ENCODE measurements at regions of chr2 and their contacts with region 1.

Region 1: DNA sequence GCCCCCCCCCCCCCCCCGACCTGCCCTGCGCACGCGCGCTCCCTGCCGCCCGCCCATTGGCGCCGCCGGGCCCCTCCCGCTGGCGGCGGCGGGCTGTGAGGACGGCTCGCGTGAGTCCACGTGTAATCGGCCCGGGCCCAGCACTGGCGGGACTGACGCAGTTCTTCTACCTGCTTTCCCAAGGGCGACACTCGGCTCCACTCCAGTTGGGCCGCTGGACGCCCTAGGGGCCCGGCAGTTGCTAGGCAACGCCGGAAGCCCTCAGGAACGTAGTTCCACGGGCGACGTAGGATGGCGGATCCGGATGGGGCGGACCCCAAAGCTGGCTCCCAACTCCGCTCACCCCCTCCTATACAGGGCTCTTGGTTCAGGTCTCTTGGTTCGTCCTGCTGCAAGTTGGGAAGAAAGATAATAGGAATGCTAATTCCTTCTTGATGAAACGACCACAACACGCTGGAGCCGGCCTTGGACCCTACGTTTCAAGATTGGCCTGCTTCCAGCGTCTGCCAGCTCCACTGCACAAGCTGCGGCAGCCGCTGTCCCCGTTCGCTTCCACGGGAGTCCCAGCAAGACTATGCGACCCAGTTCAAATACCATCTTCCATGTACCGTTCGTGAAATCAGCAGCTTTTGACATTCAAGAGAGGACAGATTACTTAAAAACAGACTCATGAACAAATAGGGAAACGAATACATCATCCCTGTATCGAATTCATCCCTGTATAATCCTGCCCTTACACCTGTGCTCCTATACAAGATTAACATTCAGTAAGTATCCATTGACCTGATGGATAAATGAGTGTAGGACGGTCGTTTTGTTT is 415 bp upstream of the MCFD2 start:
- DNase-seq: peak; percentile 96
- ATAC-seq: peak; percentile 88
- H3K4me3 ChIP-seq: peak overlapping the region; percentile 74 to 100 (median 75)
- H3K27ac ChIP-seq: peak overlapping the region; percentile 89
- H3K4me1 ChIP-seq: peaks cover 58% of the 10 kb centered on the region
- H3K27me3 ChIP-seq: no peaks in the 10 kb centered on the region; a peak in 1 of 5 replicates
- CTCF ChIP-seq: no peak
- EP300 ChIP-seq: peak in 1 of 2 experiments; percentile 26; a peak in 1 of 4 replicates
- POLR2A ChIP-seq: peak; percentile 79 to 88
- RAD21 ChIP-seq: no peak

Region 2: GRCh38 chr2:46679761-46680160 is 236.3 kb before region 1 on chr2:
- CTCF ChIA-PET with region 1: no interaction called
- POLR2A ChIA-PET with region 1: no interaction called
- in situ Hi-C with region 1: no loop called
- intact Hi-C with region 1: no loop called
- DNase-seq: no peak
- ATAC-seq: no peak
- H3K4me3 ChIP-seq: no peak overlapping the region
- H3K27ac ChIP-seq: no peak overlapping the region
- H3K4me1 ChIP-seq: no peaks in the 10 kb centered on the region
- H3K27me3 ChIP-seq: peaks cover 0 to 13% of the 10 kb centered on the region in 2 experiments; a peak in 2 of 5 replicates
- CTCF ChIP-seq: no peak
- EP300 ChIP-seq: no peak
- POLR2A ChIP-seq: no peak
- RAD21 ChIP-seq: no peak

Region 3: DNA sequence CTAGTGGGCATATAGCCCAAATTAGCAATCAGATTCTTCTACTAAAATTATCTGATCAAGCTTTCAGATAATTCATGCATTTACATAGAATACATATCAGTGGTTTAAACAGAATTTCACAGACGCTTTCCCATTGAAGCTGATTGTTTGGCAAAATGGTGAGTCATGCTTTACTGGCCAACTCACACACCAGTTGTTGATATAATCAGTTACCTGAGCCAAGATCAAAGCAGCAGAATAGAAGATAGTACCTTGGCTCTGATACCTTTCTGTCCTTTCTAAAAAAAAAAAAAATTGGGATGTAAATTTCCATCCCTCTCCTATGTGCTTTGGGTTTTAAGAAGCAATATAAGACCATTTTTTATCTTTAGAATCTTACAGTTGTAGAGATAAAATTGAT is 178.4 kb before region 1 on chr2:
- CTCF ChIA-PET with region 1: no interaction called
- POLR2A ChIA-PET with region 1: no interaction called
- in situ Hi-C with region 1: no loop called
- intact Hi-C with region 1: no loop called
- DNase-seq: peak; percentile 90
- ATAC-seq: peak; percentile 86
- H3K4me3 ChIP-seq: no peak overlapping the region
- H3K27ac ChIP-seq: peak overlapping the region; percentile 31
- H3K4me1 ChIP-seq: peaks cover 57% of the 10 kb centered on the region
- H3K27me3 ChIP-seq: no peaks in the 10 kb centered on the region
- CTCF ChIP-seq: no peak
- EP300 ChIP-seq: peak in 1 of 2 experiments; percentile 84; a peak in 2 of 4 replicates
- POLR2A ChIP-seq: no peak
- RAD21 ChIP-seq: no peak

Region 4: GRCh38 chr2:46954948-46955571 is 39.0 kb after region 1 on chr2:
- CTCF ChIA-PET with region 1: no interaction called
- POLR2A ChIA-PET with region 1: interaction called, 14 read pairs
- in situ Hi-C with region 1: no loop called
- intact Hi-C with region 1: no loop called
- DNase-seq: peak; percentile 92
- ATAC-seq: peak; percentile 93
- H3K4me3 ChIP-seq: no peak overlapping the region
- H3K27ac ChIP-seq: peak overlapping the region; percentile 61
- H3K4me1 ChIP-seq: peaks cover 28% of the 10 kb centered on the region
- H3K27me3 ChIP-seq: no peaks in the 10 kb centered on the region
- CTCF ChIP-seq: no peak
- EP300 ChIP-seq: peak in 1 of 2 experiments; percentile 36; a peak in 1 of 4 replicates
- POLR2A ChIP-seq: no peak
- RAD21 ChIP-seq: peak; percentile 18; the same call in 1 of the 2 replicates